ENCODE measurements at regions of chr2 and their contacts with region 1.

Region 1: GRCh38 chr2:170324640-170325046 is 146.7 kb downstream of the MYO3B start:
- DNase-seq: peak; percentile 39
- H3K4me3 ChIP-seq: no peak overlapping the region
- H3K27ac ChIP-seq: no peak overlapping the region
- H3K4me1 ChIP-seq: no peaks in the 10 kb centered on the region
- H3K27me3 ChIP-seq: no peaks in the 10 kb centered on the region
- CTCF ChIP-seq: peak; percentile 80 to 91

Region 2: DNA sequence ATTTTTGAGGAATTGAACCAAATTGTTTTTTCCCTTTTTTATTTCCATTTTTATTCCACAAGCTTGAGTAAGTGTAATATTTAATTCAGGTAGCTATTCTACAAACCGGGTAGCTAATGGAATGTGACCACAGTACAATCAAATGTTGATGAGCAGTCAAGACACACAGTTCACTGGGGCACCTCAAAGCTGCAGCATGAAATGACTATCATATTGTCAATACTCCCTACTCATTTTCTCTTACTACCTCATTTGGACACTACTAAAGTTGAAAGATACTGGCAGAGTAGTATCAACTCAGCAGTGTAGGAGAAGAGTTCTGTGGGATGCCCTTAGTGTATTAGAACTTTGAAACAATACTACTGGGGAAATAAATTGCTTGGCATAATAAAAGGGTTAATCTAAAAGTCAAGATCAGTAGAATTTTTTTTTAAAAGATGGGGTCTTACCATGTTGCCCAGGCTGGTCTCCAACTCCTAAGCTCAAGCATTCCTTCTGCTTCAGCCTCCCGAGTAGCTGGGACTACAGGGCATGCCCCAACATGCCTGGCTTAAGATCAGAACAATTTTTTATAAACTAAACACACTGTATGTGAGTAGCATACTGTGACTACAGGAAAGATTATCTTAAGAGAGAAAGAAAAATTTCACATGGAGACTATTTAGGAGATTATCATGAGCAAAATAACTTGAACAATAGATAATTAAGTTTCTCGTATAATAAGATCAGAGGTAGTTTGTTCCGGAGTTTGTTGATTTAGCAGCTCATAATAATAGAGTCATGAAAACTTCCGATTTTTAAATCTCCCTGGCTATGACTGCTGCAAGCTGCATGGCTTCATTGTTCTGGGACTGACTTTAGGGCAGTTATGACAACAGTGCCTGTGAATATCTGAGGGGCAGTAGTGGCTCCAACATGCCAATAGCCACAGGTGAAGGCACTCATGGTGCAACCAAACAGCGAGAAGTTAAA is 103.0 kb before region 1 on chr2:
- CTCF ChIA-PET with region 1: no interaction called
- dilution Hi-C with region 1: no loop called
- in situ Hi-C with region 1: no loop called
- intact Hi-C with region 1: no loop called
- DNase-seq: peak; percentile 58
- H3K4me3 ChIP-seq: no peak overlapping the region
- H3K27ac ChIP-seq: peak overlapping the region; percentile 28
- H3K4me1 ChIP-seq: peaks cover 15% of the 10 kb centered on the region
- H3K27me3 ChIP-seq: no peaks in the 10 kb centered on the region
- CTCF ChIP-seq: no peak

Region 3: DNA sequence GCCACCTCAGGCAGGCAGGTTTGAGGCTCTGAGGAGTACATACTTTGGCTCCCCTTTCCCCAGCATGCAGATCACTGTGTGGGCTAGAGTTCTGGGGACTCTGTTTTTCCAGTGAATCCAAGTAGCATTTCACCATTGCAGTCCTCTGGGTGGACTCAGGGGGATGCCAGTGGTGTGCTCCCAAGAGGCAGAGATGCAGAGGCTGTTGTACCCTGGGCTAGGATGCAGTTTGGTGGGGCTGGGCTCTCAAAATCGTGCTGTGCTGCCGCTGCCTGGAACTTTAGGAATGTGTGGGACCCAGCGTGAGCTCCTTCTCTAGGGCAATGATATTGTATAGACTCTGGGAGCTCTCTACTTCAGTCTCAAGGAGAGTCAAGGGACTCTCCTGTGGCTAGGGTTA is 41.8 kb before region 1 on chr2:
- CTCF ChIA-PET with region 1: no interaction called
- dilution Hi-C with region 1: no loop called
- in situ Hi-C with region 1: no loop called
- intact Hi-C with region 1: no loop called
- DNase-seq: no peak
- H3K4me3 ChIP-seq: no peak overlapping the region
- H3K27ac ChIP-seq: no peak overlapping the region
- H3K4me1 ChIP-seq: no peaks in the 10 kb centered on the region
- H3K27me3 ChIP-seq: peaks cover 3% of the 10 kb centered on the region
- CTCF ChIP-seq: no peak

Region 4: DNA sequence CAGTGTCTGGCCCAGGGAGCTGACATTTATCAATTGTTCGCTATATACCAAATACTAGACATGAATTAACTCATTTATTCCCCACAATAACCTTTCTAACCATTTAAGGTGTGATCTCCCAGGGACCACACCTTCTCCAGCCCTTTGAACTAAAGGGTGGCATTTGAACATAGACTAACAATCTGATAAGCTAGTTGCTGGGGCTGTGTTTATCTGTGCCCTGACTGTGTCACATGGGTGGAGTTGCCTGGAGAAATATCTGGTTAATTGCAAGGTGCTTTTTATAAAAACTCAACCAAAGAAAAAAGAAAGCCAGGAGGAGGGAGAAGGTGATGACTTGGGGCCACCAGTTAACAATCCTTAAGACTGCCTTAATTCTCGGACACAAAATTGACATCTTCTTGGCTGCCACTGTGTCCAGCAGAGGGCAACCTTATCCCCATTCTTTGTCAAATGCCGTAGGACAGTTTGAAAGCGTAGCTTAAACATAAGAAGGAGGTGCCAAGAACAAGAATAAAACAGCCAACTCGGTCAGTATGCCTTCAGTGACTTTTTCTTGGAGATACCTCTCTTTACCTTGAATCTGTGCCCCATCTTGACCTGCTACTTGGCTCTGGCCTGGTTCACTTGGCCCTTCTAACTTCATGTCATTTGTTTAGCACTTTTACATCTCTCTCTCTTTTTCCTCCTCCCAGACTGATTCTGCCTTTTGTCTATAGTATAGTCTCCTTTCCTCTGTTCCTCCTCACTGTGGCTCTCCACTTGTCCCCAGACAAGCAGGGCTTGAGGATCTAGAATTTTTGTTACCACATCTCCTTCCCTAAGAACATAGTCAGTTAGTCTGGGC is 36.7 kb after region 1 on chr2:
- CTCF ChIA-PET with region 1: no interaction called
- dilution Hi-C with region 1: no loop called
- in situ Hi-C with region 1: no loop called
- intact Hi-C with region 1: loop called (anchors 1 kb)
- DNase-seq: peak; percentile 50
- H3K4me3 ChIP-seq: no peak overlapping the region
- H3K27ac ChIP-seq: no peak overlapping the region
- H3K4me1 ChIP-seq: no peaks in the 10 kb centered on the region
- H3K27me3 ChIP-seq: no peaks in the 10 kb centered on the region
- CTCF ChIP-seq: peak; percentile 79 to 87

Measured in mammary epithelial cell (primary cell).